Dorsolateral prefrontal cortex (tissue), 120 donors: ENCODE measurements at regions of chr4 and their contacts with region 1.

Region 1: DNA sequence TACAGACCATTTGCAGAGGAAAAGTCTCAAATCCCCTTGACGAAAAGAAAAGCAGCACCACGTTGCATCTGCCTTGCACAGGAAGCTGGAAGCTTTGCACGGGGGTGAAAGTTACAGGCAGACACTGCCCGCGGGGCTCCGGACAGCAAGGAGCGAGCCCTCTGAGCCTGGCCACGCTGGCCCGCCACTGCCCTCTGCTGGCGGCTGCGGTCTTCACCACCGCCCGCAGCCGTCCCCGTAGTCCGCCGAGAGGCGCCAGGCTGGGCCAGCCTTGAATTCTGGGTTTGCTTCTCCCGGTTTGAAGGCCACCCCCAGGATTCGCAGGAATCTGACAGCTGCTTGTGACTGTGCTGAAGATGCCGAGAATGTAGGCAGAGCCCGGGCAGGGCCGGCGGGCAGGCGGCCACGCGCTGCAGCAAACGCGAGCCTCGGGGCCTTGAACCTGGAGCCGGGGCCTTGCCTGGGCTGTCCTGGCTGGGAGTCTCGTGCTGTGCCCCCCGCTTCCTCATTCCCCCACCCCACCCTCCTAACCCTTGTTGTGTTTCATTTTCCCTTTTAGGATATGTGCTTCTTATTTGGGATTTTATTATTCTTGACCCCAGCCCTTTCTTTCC is 49.2 kb downstream of the ENPP6 start:
- DNase-seq: peak; percentile 58 to 88 (median 74)
- H3K4me3 ChIP-seq: peak overlapping the region in 50 of 59 donors; percentile 6 to 52 (median 34)
- H3K27ac ChIP-seq: peak overlapping the region in 28 of 59 donors; percentile 7 to 72 (median 48)
- H3K27me3 ChIP-seq: no peaks in the 10 kb centered on the region
- CTCF ChIP-seq: peak; percentile 60 to 98 (median 95)

Region 2: DNA sequence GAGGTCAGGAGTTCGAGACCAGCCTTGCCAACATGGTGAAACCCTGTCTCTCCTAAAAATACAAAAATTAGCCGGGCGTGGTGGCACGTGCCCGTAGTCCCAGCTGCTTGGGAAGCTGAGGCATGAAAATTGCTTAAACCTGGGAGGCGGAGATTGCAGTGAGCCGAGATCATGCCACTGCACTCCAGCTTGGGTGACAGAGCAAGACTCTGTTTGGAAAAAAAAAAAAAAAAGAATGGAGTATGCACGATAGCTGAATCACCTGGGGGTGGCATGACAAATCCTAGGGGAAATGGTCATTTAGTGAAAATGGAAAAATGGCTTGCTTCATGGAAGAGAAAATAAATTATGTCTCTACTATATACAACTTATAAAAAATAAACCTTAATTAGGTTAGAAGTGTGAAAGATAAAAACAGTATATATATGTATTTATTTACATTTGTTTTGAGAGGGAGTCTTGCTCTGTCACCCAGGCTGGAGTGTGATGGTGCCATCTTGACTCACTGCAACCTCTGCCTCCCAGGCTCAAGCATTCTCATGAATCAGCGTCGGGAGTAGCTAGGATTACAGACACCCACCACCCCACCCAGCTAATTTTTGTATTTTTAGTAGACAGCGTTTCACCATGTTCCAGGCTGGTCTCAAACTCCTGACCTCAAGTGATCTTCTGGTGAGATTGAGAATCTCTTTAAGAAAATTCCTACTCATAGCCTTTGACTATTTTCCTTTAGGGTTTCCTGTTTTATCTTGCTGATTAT is 682.9 kb before region 1 on chr4:
- intact Hi-C with region 1: no loop called
- DNase-seq: no peak
- H3K4me3 ChIP-seq: no peak overlapping the region
- H3K27ac ChIP-seq: no peak overlapping the region
- H3K27me3 ChIP-seq: no peaks in the 10 kb centered on the region
- CTCF ChIP-seq: no peak

Region 3: GRCh38 chr4:183831026-183831446 is 337.5 kb before region 1 on chr4:
- intact Hi-C with region 1: no loop called
- DNase-seq: no peak
- H3K4me3 ChIP-seq: no peak overlapping the region
- H3K27ac ChIP-seq: no peak overlapping the region
- H3K27me3 ChIP-seq: no peaks in the 10 kb centered on the region
- CTCF ChIP-seq: no peak

Region 4: DNA sequence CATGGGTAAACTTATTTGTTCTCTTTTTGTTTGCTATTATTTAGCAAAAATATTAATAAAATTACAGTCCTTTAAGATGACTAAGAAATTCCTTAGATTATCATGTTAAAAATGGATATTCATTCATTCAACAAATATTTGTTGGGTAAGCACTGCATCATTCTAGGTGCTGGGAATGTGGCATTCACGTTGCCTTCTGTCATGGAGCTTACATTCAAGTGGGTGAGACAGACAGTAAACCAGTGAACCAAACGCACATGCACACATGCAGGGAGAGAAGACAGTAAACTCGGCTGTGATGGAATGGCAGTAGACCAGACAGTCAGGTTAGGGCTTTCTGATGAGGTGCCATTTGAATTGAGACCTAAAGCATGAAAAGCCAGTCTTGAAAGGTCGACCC is 171.6 kb before region 1 on chr4:
- intact Hi-C with region 1: loop called in 1 of 2 experiments (anchors 10 kb)
- DNase-seq: no peak
- H3K4me3 ChIP-seq: no peak overlapping the region
- H3K27ac ChIP-seq: no peak overlapping the region
- H3K27me3 ChIP-seq: no peaks in the 10 kb centered on the region
- CTCF ChIP-seq: no peak

Region 5: DNA sequence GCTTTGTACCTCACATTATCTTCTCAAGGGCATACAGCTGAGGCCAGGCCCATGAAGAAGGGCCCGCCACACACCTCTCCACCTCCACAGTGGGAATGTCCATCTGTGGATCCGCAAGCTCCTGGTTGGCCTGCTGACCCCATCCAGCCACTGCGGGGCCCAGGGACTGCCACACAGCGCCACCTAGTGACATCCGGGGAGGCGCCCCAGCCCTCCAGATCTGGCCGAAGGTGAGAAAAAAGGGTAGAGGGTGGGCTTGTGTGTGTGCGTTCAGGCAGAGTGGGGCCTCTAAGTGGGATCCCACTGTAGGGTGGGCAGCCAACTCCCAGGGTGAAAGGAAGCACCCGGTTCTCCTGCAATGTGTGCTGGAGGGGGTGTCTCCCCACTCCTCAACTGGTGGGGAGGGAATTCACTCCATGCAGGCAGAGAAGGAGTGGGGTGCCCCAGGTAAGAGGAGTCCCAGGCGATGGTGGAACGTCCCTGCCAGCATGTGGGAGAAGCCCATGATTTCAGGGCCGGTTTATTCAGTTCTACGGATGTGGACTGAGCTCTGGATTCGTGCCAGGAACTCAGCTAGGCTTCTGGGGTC is 68.1 kb before region 1 on chr4:
- intact Hi-C with region 1: loop called (anchors 5 kb)
- DNase-seq: peak in 4 of 10 donors; percentile 49 to 83 (median 67)
- H3K4me3 ChIP-seq: no peak overlapping the region
- H3K27ac ChIP-seq: peak overlapping the region in 58 of 59 donors; percentile 3 to 92 (median 68)
- H3K27me3 ChIP-seq: no peaks in the 10 kb centered on the region
- CTCF ChIP-seq: peak in 43 of 56 donors; percentile 37 to 95 (median 67)

Region 6: GRCh38 chr4:184250795-184251669 is 82.5 kb after region 1 on chr4:
- intact Hi-C with region 1: loop called (anchors 2 to 5 kb)
- DNase-seq: no peak
- H3K4me3 ChIP-seq: no peak overlapping the region
- H3K27ac ChIP-seq: no peak overlapping the region
- H3K27me3 ChIP-seq: no peaks in the 10 kb centered on the region
- CTCF ChIP-seq: peak; percentile 43 to 77 (median 66)